ENCODE measurements at regions of chr3 and their contacts with region 1.

Region 1: DNA sequence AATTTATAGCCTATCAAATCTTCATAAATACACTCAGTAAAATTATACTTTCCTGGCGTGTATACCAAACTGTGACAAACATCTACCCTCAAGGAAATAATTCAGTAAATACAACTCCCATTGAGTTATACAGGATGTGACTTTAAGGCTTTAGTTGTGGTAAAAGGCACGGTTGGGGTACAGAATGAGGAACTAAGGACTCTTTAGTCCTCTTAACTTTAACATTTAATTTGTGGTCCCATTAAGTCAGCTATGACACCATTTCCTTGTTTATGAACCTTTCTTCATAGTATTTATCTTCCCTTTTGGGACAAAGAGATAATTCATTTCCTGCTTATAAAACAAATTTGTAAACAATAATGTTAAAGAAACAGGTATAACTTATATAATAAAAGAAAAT is 30.2 kb downstream of the IFT80 start:
- DNase-seq: no peak
- ATAC-seq: no peak
- H3K4me3 ChIP-seq: no peak overlapping the region
- H3K27ac ChIP-seq: no peak overlapping the region
- H3K4me1 ChIP-seq: no peaks in the 10 kb centered on the region
- H3K27me3 ChIP-seq: no peaks in the 10 kb centered on the region
- CTCF ChIP-seq: no peak
- POLR2A ChIP-seq: no peak

Region 2: GRCh38 chr3:160099834-160100233 is 269.0 kb before region 1 on chr3:
- intact Hi-C with region 1: no loop called
- DNase-seq: no peak
- ATAC-seq: no peak
- H3K4me3 ChIP-seq: no peak overlapping the region
- H3K27ac ChIP-seq: no peak overlapping the region
- H3K4me1 ChIP-seq: no peaks in the 10 kb centered on the region
- H3K27me3 ChIP-seq: no peaks in the 10 kb centered on the region
- CTCF ChIP-seq: no peak
- POLR2A ChIP-seq: no peak

Region 3: GRCh38 chr3:160278210-160278609 is 90.6 kb before region 1 on chr3:
- intact Hi-C with region 1: loop called in 1 of 10 experiments (anchors 5 kb)
- DNase-seq: no peak
- ATAC-seq: no peak
- H3K4me3 ChIP-seq: no peak overlapping the region
- H3K27ac ChIP-seq: no peak overlapping the region
- H3K4me1 ChIP-seq: no peaks in the 10 kb centered on the region
- H3K27me3 ChIP-seq: no peaks in the 10 kb centered on the region
- CTCF ChIP-seq: no peak
- POLR2A ChIP-seq: no peak

Measured in heart left ventricle (tissue), 16 donors.